Tibial artery (tissue), 4 donors: ENCODE measurements at regions of chr17 and their contacts with region 1.

Region 1: DNA sequence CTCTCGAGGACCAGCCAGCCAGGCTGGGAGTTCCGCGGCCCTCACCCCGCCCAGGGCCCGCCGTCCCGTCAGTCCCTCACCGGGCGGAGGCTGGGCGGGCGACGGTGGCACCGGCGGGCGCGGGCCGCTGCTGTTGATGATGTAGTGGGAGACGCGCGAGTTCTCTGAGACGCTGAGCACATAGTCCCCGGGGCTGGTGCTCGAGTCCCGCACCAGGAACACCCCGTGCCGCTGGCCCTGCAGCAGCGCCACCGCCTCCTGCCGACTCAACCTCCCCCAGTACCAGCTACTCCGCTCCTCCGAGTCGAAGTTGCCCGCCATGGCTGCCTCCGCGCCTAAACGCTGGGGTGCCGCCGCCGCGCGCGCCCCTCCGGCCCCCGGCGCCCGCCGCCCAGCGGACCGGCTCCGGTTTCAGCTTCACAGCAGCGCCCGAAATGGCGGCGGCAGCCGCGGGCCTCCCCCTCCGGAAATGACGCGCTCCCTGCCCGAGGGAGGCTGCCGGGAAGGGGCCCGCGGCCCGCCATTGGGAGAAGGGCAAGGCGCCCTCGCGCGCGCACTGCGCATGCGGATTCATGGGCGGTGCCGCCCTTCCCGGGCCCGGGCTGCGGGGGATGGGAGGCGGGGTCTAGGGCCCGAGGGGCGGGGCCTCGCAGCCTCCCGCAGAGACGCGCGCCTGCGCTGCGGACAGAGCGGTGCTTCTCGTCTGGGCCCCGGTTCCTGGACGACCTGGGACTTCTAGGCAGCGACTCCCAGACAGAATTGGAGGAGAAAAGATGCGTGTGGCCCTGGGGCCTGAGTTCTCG is at the start of gene CRK:
- DNase-seq: peak; percentile 94 to 98
- H3K4me3 ChIP-seq: peak within 1 kb of the TSS; percentile 92 to 93
- H3K27ac ChIP-seq: peak within 1 kb of the TSS; percentile 93 to 96
- H3K4me1 ChIP-seq: peaks cover 0 to 65% (median 49%) of the 10 kb centered on the region in 4 donors
- H3K27me3 ChIP-seq: no peaks in the 10 kb centered on the region
- CTCF ChIP-seq: peak in 1 of 2 experiments; percentile 29

Region 2: GRCh38 chr17:1490643-1491442 is 34.8 kb after region 1 on chr17:
- intact Hi-C with region 1: loop called (anchors 5 kb)
- DNase-seq: peak; percentile 48 to 82
- H3K4me3 ChIP-seq: peak overlapping the region; percentile 69 to 73
- H3K27ac ChIP-seq: peak overlapping the region; percentile 99
- H3K4me1 ChIP-seq: peaks cover 5 to 89% (median 82%) of the 10 kb centered on the region in 4 donors
- H3K27me3 ChIP-seq: no peaks in the 10 kb centered on the region
- CTCF ChIP-seq: no peak

Region 3: GRCh38 chr17:1590031-1590748 is 134.2 kb after region 1 on chr17:
- intact Hi-C with region 1: no loop called
- DNase-seq: peak; percentile 75 to 94
- H3K4me3 ChIP-seq: peak overlapping the region; percentile 18 to 24
- H3K27ac ChIP-seq: peak overlapping the region; percentile 78 to 80
- H3K4me1 ChIP-seq: peaks cover 0 to 27% (median 17%) of the 10 kb centered on the region in 4 donors
- H3K27me3 ChIP-seq: no peaks in the 10 kb centered on the region
- CTCF ChIP-seq: no peak